ENCODE measurements at regions of chr18 and their contacts with region 1.

Region 1: GRCh38 chr18:12744103-12744502 is 41.3 kb downstream of the PSMG2 start:
- DNase-seq: peak; percentile 92
- ATAC-seq: peak; percentile 56
- H3K4me3 ChIP-seq: no peak overlapping the region
- H3K27ac ChIP-seq: no peak overlapping the region
- H3K4me1 ChIP-seq: peaks cover 27% of the 10 kb centered on the region
- H3K27me3 ChIP-seq: no peaks in the 10 kb centered on the region
- CTCF ChIP-seq: peak; percentile 91

Region 2: GRCh38 chr18:12391618-12392165 is 352.4 kb before region 1 on chr18:
- CTCF ChIA-PET with region 1: no interaction called
- POLR2A ChIA-PET with region 1: no interaction called
- intact Hi-C with region 1: loop called (anchors 5 kb)
- DNase-seq: peak; percentile 77
- ATAC-seq: peak; percentile 56
- H3K4me3 ChIP-seq: no peak overlapping the region
- H3K27ac ChIP-seq: no peak overlapping the region
- H3K4me1 ChIP-seq: peaks cover 29% of the 10 kb centered on the region
- H3K27me3 ChIP-seq: no peaks in the 10 kb centered on the region
- CTCF ChIP-seq: peak; percentile 97

Region 3: GRCh38 chr18:12589448-12589847 is 154.7 kb before region 1 on chr18:
- CTCF ChIA-PET with region 1: no interaction called
- POLR2A ChIA-PET with region 1: no interaction called
- intact Hi-C with region 1: no loop called
- DNase-seq: no peak
- ATAC-seq: peak; percentile 27; the same call in 1 of the 2 replicates
- H3K4me3 ChIP-seq: no peak overlapping the region
- H3K27ac ChIP-seq: no peak overlapping the region
- H3K4me1 ChIP-seq: no peaks in the 10 kb centered on the region
- H3K27me3 ChIP-seq: no peaks in the 10 kb centered on the region
- CTCF ChIP-seq: no peak

Region 4: GRCh38 chr18:12726774-12727550 is 17.1 kb before region 1 on chr18:
- CTCF ChIA-PET with region 1: interaction called, 7 read pairs
- POLR2A ChIA-PET with region 1: no interaction called
- intact Hi-C with region 1: loop called (anchors 1 kb)
- DNase-seq: peak; percentile 92
- ATAC-seq: peak; percentile 74
- H3K4me3 ChIP-seq: no peak overlapping the region
- H3K27ac ChIP-seq: no peak overlapping the region
- H3K4me1 ChIP-seq: no peaks in the 10 kb centered on the region
- H3K27me3 ChIP-seq: no peaks in the 10 kb centered on the region
- CTCF ChIP-seq: peak; percentile 94

Region 5: GRCh38 chr18:12838178-12838634 is 94.1 kb after region 1 on chr18:
- CTCF ChIA-PET with region 1: no interaction called
- POLR2A ChIA-PET with region 1: no interaction called
- intact Hi-C with region 1: loop called (anchors 5 kb)
- DNase-seq: peak; percentile 91
- ATAC-seq: peak; percentile 80
- H3K4me3 ChIP-seq: peak overlapping the region; percentile 33; the same call in 1 of the 2 replicates
- H3K27ac ChIP-seq: peak overlapping the region; percentile 82
- H3K4me1 ChIP-seq: peaks cover 28% of the 10 kb centered on the region
- H3K27me3 ChIP-seq: no peaks in the 10 kb centered on the region
- CTCF ChIP-seq: no peak

Region 6: GRCh38 chr18:12890506-12890905 is 146.4 kb after region 1 on chr18:
- CTCF ChIA-PET with region 1: interaction called, 8 read pairs
- POLR2A ChIA-PET with region 1: interaction called, 3 read pairs
- intact Hi-C with region 1: loop called (anchors 1 kb)
- DNase-seq: peak; percentile 22
- ATAC-seq: peak; percentile 25; the same call in 1 of the 2 replicates
- H3K4me3 ChIP-seq: no peak overlapping the region
- H3K27ac ChIP-seq: no peak overlapping the region
- H3K4me1 ChIP-seq: peaks cover 10% of the 10 kb centered on the region
- H3K27me3 ChIP-seq: no peaks in the 10 kb centered on the region
- CTCF ChIP-seq: no peak

Region 7: GRCh38 chr18:12934454-12935071 is 190.5 kb after region 1 on chr18:
- CTCF ChIA-PET with region 1: interaction called, 22 read pairs
- POLR2A ChIA-PET with region 1: no interaction called
- intact Hi-C with region 1: loop called (anchors 1 kb)
- DNase-seq: peak; percentile 92
- ATAC-seq: peak; percentile 95
- H3K4me3 ChIP-seq: no peak overlapping the region; the same call in 1 of the 2 replicates
- H3K27ac ChIP-seq: no peak overlapping the region
- H3K4me1 ChIP-seq: peaks cover 6% of the 10 kb centered on the region; the same call in 1 of the 2 replicates
- H3K27me3 ChIP-seq: no peaks in the 10 kb centered on the region
- CTCF ChIP-seq: peak; percentile 99

Region 8: GRCh38 chr18:13036622-13037320 is 292.7 kb after region 1 on chr18:
- CTCF ChIA-PET with region 1: no interaction called
- POLR2A ChIA-PET with region 1: no interaction called
- intact Hi-C with region 1: no loop called
- DNase-seq: peak; percentile 29
- ATAC-seq: peak; percentile 93
- H3K4me3 ChIP-seq: no peak overlapping the region
- H3K27ac ChIP-seq: no peak overlapping the region
- H3K4me1 ChIP-seq: 0 out of 2 replicates have a peak, but pooled peaks cover 4% of the 10 kb centered on the region
- H3K27me3 ChIP-seq: no peaks in the 10 kb centered on the region
- CTCF ChIP-seq: no peak

Region 9: DNA sequence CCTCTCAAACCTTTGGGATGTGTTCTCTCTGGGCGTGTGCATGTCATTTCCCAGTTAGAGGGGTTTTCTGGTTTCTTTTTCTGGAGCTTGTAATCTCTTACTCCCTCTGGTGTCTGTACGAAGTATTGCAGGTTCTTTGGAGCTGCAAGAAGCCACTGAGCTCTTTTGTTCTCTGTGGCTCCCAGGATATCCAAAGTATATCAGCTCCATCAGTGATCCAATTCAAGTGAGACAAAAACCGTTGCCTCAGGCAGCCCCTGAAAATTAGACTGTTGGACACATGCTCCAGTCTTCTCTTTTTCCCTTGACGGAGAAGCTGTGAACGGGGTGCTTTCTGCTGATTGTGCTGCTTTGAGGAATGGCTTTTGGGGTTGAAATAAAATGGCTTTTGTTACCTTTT is 415.5 kb after region 1 on chr18:
- CTCF ChIA-PET with region 1: interaction called, 4 read pairs
- POLR2A ChIA-PET with region 1: no interaction called
- intact Hi-C with region 1: loop called (anchors 1 kb)
- DNase-seq: peak; percentile 81
- ATAC-seq: peak; percentile 73; the same call in 1 of the 2 replicates
- H3K4me3 ChIP-seq: no peak overlapping the region
- H3K27ac ChIP-seq: no peak overlapping the region
- H3K4me1 ChIP-seq: no peaks in the 10 kb centered on the region
- H3K27me3 ChIP-seq: no peaks in the 10 kb centered on the region
- CTCF ChIP-seq: peak; percentile 83

Measured in PC-3 (cell line).